Dendritic cell treated with granulocyte-macrophage colony-stimulating factor and Interleukin-4, amounts not matched to agents 40 ng/mL and 50 ng/mL, for 4 days (primary cell): ENCODE measurements at regions of chr14 and their contacts with region 1.

Region 1: GRCh38 chr14:96100161-96101029 is 61.2 kb downstream of the C14orf132 start:
- H3K4me3 Mint-ChIP-seq: no peak overlapping the region
- H3K27ac Mint-ChIP-seq: no peak overlapping the region
- H3K4me1 Mint-ChIP-seq: no peaks in the 10 kb centered on the region
- H3K27me3 Mint-ChIP-seq: no peaks in the 10 kb centered on the region

Region 2: DNA sequence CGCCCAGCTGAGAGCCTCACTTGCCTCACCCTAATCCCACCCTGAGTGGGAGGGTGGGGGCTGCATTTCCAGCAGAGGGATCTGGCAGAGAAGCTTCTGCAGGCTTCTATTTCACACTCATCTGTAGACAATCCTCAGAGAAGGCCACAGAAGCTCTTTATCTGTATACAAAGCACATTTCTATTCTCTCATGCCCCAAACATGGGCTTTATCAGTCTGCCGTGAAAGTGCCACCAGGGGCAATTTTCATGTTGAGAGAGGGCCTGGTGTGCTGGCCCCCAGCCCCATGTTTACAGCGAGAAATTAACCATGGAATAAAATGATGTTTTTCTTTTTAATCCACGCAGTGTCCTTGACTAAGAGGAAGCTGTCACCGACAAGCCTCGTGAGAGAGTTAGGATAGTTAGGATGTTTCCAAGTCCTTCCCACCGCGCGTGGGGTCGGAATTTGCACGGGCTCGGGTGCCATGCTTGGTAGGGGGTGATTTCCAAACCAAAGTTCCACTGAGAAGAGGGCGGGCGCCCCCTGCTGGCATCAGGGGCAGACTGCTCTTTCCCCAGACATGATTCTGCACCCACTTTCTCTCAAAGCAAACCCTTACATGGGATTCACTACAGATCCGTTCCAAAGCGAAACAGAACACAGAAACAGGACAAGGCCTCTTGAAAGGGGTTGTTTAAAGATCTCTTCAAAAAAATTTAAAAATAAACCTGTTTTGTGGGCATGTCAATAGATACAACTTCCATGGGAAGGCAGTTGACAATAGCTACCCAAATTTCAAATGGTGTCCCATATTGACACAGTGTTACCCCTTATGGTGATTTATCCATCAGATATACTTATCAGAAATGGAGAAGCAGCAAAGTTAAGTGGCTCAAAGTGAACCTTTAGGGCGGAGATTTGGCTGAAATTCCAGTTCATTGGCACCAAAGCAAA is 175.1 kb after region 1 on chr14:
- intact Hi-C with region 1: loop called (anchors 2 kb)
- H3K4me3 Mint-ChIP-seq: no peak overlapping the region
- H3K27ac Mint-ChIP-seq: no peak overlapping the region
- H3K4me1 Mint-ChIP-seq: no peaks in the 10 kb centered on the region
- H3K27me3 Mint-ChIP-seq: peaks cover 3% of the 10 kb centered on the region